WTC11 (cell line): ENCODE measurements at regions of chr4 and their contacts with region 1.

Region 1: DNA sequence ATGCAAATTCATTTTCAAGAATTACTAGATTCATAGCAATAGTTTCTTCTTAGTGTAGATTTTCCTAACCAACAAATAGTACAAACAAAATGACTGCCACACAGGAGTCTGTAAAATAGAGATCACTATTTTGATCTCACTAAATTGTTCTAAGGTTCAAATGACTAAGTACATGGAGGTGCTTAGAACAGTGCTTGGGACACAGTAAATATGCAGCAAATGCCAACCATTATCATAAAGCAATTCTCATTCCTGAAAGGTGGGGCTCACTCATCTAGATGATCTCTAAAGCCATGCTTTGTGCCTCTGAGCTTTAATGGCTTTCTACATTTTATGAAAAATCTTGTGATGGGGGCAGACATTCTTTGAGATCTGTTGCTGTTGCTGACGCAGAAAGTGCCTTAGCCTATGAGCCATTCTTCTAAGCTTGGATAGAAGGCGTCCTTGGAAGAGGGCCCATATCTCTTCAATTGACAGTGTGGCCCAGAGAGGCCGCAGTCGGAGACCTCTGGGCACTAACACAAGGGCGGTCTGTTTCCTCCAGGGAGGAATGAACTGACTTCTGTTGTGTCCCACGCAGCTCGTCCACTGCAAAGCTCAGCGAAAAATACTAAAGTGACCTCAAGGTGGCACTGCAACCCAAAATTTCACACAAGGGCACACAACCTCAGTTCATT is 23.5 kb downstream of the TLR10 start:
- DNase-seq: peak; percentile 67
- ATAC-seq: peak; percentile 89
- H3K4me3 Mint-ChIP-seq: no peak overlapping the region
- H3K27ac Mint-ChIP-seq: no peak overlapping the region
- H3K4me1 Mint-ChIP-seq: peaks cover 9% of the 10 kb centered on the region; the same call in 1 of the 2 replicates
- H3K27me3 Mint-ChIP-seq: no peaks in the 10 kb centered on the region
- CTCF ChIP-seq: peak; percentile 52

Region 2: DNA sequence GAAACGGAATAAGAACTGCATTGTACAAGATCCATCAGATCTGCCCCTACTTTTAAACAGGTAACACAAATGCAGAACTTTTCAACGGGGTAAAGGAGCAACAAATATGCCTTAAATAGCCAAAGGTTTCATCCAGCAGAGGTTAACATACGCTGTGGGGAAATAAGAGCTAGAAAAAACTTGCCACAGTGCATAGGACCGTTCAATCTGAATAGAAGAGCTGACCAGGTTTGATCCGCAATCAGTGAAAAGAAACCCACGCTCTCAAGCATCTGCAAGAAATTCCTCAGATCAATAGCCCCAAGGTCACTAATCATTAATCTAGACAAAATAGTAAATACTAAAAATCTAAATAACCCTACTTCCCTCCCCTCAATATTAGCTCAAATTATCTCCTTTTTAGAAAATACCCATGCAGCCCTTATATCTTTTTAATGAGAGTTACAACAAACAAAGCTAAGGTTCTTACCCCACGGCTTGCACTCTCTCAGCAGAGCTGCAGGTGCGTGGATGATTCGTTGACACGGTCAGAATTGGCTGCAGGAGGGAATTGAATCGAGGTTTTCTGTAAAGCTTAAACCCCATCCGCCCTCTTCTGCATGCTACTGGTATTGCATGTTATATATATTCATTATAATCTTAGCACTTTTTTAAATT is 23.3 kb after region 1 on chr4 and contains the start of gene TLR10:
- CTCF ChIA-PET with region 1: interaction called, 65 read pairs
- POLR2A ChIA-PET with region 1: interaction called, 3 read pairs
- DNase-seq: peak; percentile 27
- ATAC-seq: peak; percentile 74
- H3K4me3 Mint-ChIP-seq: no peak within 1 kb of the TSS
- H3K27ac Mint-ChIP-seq: no peak within 1 kb of the TSS
- H3K4me1 Mint-ChIP-seq: no peaks in the 10 kb centered on the region
- H3K27me3 Mint-ChIP-seq: peaks cover 2% of the 10 kb centered on the region; the same call in 1 of the 2 replicates
- CTCF ChIP-seq: peak; percentile 58
- total RNA-seq, gene TLR10: 0.30 TPM in 1 of 3 replicates, not detected in the others

Region 3: DNA sequence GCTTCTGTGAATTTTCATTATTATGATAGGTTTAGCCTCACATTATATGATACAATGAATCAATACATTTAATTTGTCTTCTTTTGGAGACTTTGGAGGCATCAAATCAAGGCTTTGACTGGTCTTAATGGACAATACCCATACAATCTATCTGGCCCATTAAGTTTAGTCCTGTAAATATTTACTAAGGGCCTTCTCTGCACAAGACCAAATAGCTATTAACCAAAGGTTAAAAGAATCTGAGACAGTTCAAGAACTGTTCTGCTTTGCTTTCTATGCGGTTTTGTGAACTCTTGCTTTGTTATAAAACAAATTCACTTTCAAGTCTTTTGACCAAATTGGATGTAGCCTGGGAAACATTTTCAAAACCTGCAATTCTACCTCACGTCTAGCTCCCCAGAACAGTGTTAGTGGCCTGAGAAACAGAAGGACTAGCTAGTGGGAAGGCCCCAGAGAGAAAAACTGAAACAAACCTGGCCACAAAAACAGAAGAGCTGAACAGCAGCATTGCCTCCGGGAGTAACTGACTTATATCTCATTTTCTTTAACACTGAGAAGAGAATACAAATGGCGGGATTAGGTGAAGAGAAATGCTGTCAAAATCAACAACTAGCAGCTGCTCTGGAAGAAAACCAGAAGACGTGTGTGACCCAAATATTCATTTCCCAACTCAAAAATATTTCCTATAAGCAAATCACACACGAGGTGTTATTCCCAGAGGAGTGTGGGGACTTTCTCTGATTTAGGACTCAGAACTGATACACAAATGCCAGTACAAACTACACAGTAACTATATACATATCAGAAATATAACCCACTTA is 44.8 kb after region 1 on chr4:
- CTCF ChIA-PET with region 1: interaction called, 10 read pairs
- POLR2A ChIA-PET with region 1: no interaction called
- DNase-seq: no peak
- ATAC-seq: no peak
- H3K4me3 Mint-ChIP-seq: no peak overlapping the region
- H3K27ac Mint-ChIP-seq: peak overlapping the region; percentile 30; the same call in 1 of the 2 replicates
- H3K4me1 Mint-ChIP-seq: no peaks in the 10 kb centered on the region
- H3K27me3 Mint-ChIP-seq: no peaks in the 10 kb centered on the region; the same call in 1 of the 2 replicates
- CTCF ChIP-seq: no peak

Region 4: DNA sequence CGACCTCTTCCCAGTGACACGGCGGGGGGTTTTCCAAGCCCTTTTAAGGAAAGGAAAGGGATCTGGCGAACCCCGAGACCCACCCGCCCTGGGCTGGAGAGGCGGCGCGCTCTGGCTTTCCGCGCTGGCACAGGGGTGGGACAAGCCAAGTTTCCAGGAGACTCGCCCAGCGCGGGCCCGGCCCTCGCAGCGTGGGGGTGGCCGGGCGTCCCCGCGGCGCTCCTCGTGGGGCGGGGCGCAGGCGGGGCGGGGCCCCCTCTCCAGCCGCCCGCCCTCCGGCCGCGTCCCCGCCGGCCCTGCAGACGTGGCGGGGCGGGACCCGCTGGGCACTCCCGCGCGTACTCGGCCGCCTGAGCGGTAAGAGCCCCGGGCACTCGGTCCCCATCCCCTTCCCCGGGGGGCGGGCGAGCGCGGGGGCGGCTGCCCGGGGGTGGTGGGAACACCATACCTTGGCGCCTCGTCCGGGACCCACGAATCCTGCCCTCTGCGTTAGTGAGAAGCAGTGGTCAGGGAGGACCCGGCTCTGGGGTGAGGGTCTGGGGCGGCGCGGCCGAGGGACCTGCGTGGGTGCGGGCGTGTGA is 108.3 kb after region 1 on chr4 and contains the start of gene FAM114A1:
- CTCF ChIA-PET with region 1: interaction called, 14 read pairs
- POLR2A ChIA-PET with region 1: no interaction called
- DNase-seq: peak; percentile 61
- ATAC-seq: peak; percentile 71
- H3K4me3 Mint-ChIP-seq: peak within 1 kb of the TSS; percentile 75
- H3K27ac Mint-ChIP-seq: no peak within 1 kb of the TSS
- H3K4me1 Mint-ChIP-seq: peaks cover 16% of the 10 kb centered on the region
- H3K27me3 Mint-ChIP-seq: peaks cover 5% of the 10 kb centered on the region; the same call in 1 of the 2 replicates
- CTCF ChIP-seq: no peak
- total RNA-seq, gene FAM114A1: 13.8 to 17.6 TPM (median 15.7 TPM) in 3 replicates

Region 5: GRCh38 chr4:39134683-39135319 is 375.6 kb after region 1 on chr4:
- CTCF ChIA-PET with region 1: interaction called, 15 read pairs
- POLR2A ChIA-PET with region 1: no interaction called
- DNase-seq: no peak
- ATAC-seq: no peak
- H3K4me3 Mint-ChIP-seq: no peak overlapping the region
- H3K27ac Mint-ChIP-seq: no peak overlapping the region
- H3K4me1 Mint-ChIP-seq: peaks cover 6% of the 10 kb centered on the region; the same call in 1 of the 2 replicates
- H3K27me3 Mint-ChIP-seq: no peaks in the 10 kb centered on the region
- CTCF ChIP-seq: no peak